Activated CD4-positive, alpha-beta memory T cell treated with anti-CD3 and anti-CD28 coated beads for 36 hours (primary cell): ENCODE measurements at regions of chr2 and their contacts with region 1.

Region 1: DNA sequence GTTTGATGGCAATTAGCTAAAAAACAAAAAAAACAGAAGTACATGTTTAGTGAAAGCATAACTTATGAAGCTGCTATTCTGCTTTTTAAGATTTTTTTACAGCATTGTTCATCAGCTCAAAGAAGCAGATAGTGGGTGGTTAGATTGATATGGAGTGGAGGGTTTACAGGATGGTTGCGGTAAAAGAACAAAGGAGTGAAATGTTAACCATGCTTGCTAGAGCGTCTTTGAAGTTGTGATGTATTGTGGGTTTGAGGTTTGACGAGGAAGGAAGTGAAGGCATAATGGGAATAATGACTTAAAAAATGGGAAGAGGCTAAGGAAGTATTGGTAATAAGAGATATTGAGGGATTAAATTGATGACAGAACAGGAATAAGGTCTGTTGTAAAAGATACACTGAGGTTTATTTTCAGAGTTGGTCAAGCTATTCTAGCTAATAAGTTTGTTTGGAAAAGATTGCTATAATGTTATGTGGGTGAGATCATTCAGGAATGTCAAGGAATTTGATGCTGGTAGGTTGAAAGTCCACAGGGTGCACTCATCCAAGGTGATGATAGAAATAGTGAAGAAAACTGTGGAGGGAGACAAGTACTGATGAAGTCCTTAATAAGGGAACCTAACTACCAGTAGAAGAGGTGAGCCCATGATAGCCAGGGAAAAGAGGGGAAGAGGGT is 14.6 kb downstream of the SPOPL start:
- DNase-seq: no peak
- H3K4me3 Mint-ChIP-seq: no peak overlapping the region
- H3K27ac Mint-ChIP-seq: no peak overlapping the region
- H3K4me1 Mint-ChIP-seq: peaks cover 42% of the 10 kb centered on the region
- H3K27me3 Mint-ChIP-seq: peaks cover 4% of the 10 kb centered on the region

Region 2: GRCh38 chr2:138486363-138487198 is 29.6 kb before region 1 on chr2:
- CTCF ChIA-PET with region 1: no interaction called
- POLR2A ChIA-PET with region 1: no interaction called
- intact Hi-C with region 1: no loop called
- DNase-seq: no peak
- H3K4me3 Mint-ChIP-seq: no peak overlapping the region
- H3K27ac Mint-ChIP-seq: no peak overlapping the region
- H3K4me1 Mint-ChIP-seq: no peaks in the 10 kb centered on the region
- H3K27me3 Mint-ChIP-seq: no peaks in the 10 kb centered on the region

Region 3: GRCh38 chr2:138550670-138551287 is 34.6 kb after region 1 on chr2:
- CTCF ChIA-PET with region 1: no interaction called
- POLR2A ChIA-PET with region 1: no interaction called
- intact Hi-C with region 1: loop called (anchors 5 kb)
- DNase-seq: no peak
- H3K4me3 Mint-ChIP-seq: no peak overlapping the region
- H3K27ac Mint-ChIP-seq: no peak overlapping the region
- H3K4me1 Mint-ChIP-seq: peaks cover 6% of the 10 kb centered on the region
- H3K27me3 Mint-ChIP-seq: no peaks in the 10 kb centered on the region